PC-9 (cell line): ENCODE measurements at regions of chr3 and their contacts with region 1.

Region 1: DNA sequence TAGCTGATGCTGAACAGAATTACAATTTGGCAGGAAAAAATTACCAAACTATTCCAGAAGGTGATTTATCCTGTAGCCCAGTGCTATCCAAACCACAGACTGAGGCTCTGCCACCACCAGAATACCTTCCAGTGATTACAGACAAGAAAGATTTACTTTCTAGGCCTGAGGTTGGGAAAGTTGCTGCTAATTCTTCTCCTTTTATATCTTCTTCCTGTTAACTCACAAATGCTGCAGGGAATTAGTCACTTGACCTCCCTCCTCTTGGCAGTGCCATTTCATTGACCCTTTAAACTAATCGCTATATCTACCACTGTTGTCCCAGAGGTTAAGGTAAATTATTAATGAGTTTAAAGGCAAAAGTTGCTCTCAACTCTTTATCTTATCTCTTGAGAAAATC is 118.4 kb downstream of the CTNNB1 start:
- DNase-seq: peak; percentile 17 to 72
- H3K4me3 ChIP-seq: no peak overlapping the region
- H3K27ac ChIP-seq: peak overlapping the region; percentile 38
- H3K4me1 ChIP-seq: peaks cover 18% of the 10 kb centered on the region
- H3K27me3 ChIP-seq: no peaks in the 10 kb centered on the region
- CTCF ChIP-seq: no peak

Region 2: DNA sequence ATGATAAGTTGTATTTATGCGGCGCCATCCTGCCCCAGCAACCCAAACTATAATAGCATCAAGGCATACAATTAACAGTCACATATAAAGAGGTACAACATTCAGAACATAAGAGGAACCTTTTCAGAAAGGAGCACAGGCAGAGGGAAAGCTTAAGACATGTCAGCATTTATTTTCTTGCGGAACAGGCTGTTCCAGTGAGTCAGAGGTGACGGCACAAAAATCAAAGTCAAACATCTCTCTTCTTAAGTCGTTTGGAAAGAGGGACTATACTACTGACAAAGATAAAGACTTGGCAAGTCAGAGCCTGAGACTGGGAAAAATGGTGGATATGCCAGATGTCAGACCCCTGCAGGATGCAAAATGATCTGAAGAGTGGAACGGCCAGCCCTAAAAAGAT is 10.0 kb after region 1 on chr3:
- CTCF ChIA-PET with region 1: no interaction called
- POLR2A ChIA-PET with region 1: no interaction called
- intact Hi-C with region 1: loop called (anchors 1 kb)
- DNase-seq: peak; percentile 36 to 71
- H3K4me3 ChIP-seq: no peak overlapping the region
- H3K27ac ChIP-seq: no peak overlapping the region
- H3K4me1 ChIP-seq: peaks cover 25% of the 10 kb centered on the region
- H3K27me3 ChIP-seq: no peaks in the 10 kb centered on the region
- CTCF ChIP-seq: no peak

Region 3: DNA sequence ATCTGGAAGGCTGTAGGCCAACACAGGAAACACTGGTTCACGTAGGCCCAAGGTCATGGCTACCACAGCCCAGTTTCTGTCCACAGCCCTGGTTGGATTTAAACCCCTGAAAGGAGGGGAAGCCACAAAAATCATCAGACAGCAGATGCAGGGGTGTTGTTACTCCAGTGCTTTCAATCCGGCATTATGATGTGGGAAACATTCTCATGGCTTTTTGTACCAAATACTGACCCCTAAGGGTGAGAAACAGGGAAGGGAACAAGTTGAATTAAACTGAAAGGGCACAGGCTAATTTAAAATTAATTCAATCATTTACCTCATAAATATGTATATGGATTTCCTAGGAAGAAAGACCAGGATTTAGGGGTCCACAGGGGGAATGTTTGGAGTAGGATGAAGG is 257.2 kb after region 1 on chr3:
- CTCF ChIA-PET with region 1: no interaction called
- POLR2A ChIA-PET with region 1: no interaction called
- intact Hi-C with region 1: no loop called
- DNase-seq: no peak
- H3K4me3 ChIP-seq: no peak overlapping the region
- H3K27ac ChIP-seq: no peak overlapping the region
- H3K4me1 ChIP-seq: no peaks in the 10 kb centered on the region
- H3K27me3 ChIP-seq: no peaks in the 10 kb centered on the region
- CTCF ChIP-seq: no peak